Dendritic cell treated with granulocyte-macrophage colony-stimulating factor and Interleukin-4, amounts not matched to agents 40 ng/mL and 50 ng/mL, for 4 days (primary cell): ENCODE measurements at regions of chr5 and their contacts with region 1.

Region 1: GRCh38 chr5:6765612-6766525 is 52.6 kb downstream of the TENT4A start:
- H3K4me3 Mint-ChIP-seq: peak overlapping the region; percentile 59
- H3K27ac Mint-ChIP-seq: peak overlapping the region; percentile 97
- H3K4me1 Mint-ChIP-seq: peaks cover 47% of the 10 kb centered on the region
- H3K27me3 Mint-ChIP-seq: no peaks in the 10 kb centered on the region

Region 2: DNA sequence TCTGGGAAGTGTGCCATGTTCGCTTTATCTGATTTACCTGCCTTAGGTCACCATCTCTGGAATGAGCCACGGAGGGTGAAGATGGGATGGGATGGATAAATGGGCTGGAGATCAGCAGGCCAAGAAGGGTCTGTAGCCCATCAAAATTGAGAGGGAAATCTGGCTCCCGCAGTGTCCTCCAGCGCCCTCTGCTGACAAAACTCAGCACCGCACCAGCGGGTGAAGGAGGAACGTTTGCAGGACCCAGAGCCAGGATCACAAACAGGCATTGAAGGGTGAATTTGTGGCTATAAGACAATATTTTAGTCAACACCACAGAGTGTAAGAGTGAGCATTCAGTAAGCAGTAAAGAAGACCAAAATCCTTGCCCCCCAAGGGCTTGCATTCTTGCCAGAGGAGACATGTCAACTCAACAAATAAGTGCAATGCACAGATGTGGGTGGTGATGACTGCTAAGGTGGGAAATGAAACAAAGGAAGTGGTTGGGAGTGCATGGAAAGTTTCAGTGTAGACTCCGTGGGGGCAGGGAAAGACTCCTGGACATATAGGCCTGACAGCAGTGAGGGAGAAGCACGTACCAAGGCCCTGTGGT is 71.7 kb after region 1 on chr5:
- intact Hi-C with region 1: loop called (anchors 1 kb)
- H3K4me3 Mint-ChIP-seq: no peak overlapping the region
- H3K27ac Mint-ChIP-seq: no peak overlapping the region
- H3K4me1 Mint-ChIP-seq: peaks cover 7% of the 10 kb centered on the region
- H3K27me3 Mint-ChIP-seq: peaks cover 5% of the 10 kb centered on the region

Region 3: GRCh38 chr5:7391814-7392692 is 626.2 kb after region 1 on chr5:
- intact Hi-C with region 1: loop called (anchors 5 kb)
- H3K4me3 Mint-ChIP-seq: no peak overlapping the region
- H3K27ac Mint-ChIP-seq: no peak overlapping the region
- H3K4me1 Mint-ChIP-seq: peaks cover 12% of the 10 kb centered on the region
- H3K27me3 Mint-ChIP-seq: peaks cover 39% of the 10 kb centered on the region

Region 4: DNA sequence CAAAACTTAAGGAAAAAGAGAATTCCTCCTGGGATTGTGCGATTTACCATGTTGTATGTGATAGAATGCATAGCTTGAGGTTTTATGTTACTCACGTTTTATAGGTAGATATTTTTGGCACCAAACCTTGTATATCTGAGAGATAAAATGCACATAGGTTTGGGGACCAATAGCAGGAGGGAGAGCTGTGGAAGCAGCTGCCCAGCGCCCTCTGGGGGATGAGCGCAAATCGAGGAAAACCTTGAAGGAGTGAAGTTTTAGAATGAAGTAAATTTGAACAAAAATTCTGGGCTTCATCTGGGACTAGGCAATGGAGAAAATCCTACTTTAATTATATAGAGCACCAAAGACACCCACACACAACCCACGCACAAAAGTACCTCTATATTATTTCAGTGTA is 827.0 kb after region 1 on chr5:
- intact Hi-C with region 1: loop called (anchors 5 kb)
- H3K4me3 Mint-ChIP-seq: no peak overlapping the region
- H3K27ac Mint-ChIP-seq: no peak overlapping the region
- H3K4me1 Mint-ChIP-seq: no peaks in the 10 kb centered on the region
- H3K27me3 Mint-ChIP-seq: no peaks in the 10 kb centered on the region

Region 5: GRCh38 chr5:7815892-7816534 is 1050.1 kb after region 1 on chr5:
- intact Hi-C with region 1: loop called (anchors 10 kb)
- H3K4me3 Mint-ChIP-seq: no peak overlapping the region
- H3K27ac Mint-ChIP-seq: no peak overlapping the region
- H3K4me1 Mint-ChIP-seq: peaks cover 13% of the 10 kb centered on the region
- H3K27me3 Mint-ChIP-seq: no peaks in the 10 kb centered on the region